Activated CD8-positive, alpha-beta T cell treated with anti-CD3 and anti-CD28 coated beads, Interleukin-2, amount 10 ng/mL, durations not matched to agents 7 days and 5 days (primary cell): ENCODE measurements at regions of chr7 and their contacts with region 1.

Region 1: GRCh38 chr7:141975806-141976523 is 2.4 kb upstream of the TAS2R38 start:
- DNase-seq: peak; percentile 77
- ATAC-seq: peak; percentile 91
- H3K4me3 Mint-ChIP-seq: peak overlapping the region; percentile 63
- H3K27ac Mint-ChIP-seq: peak overlapping the region; percentile 1
- H3K4me1 Mint-ChIP-seq: peaks cover 22% of the 10 kb centered on the region
- H3K27me3 Mint-ChIP-seq: no peaks in the 10 kb centered on the region

Region 2: DNA sequence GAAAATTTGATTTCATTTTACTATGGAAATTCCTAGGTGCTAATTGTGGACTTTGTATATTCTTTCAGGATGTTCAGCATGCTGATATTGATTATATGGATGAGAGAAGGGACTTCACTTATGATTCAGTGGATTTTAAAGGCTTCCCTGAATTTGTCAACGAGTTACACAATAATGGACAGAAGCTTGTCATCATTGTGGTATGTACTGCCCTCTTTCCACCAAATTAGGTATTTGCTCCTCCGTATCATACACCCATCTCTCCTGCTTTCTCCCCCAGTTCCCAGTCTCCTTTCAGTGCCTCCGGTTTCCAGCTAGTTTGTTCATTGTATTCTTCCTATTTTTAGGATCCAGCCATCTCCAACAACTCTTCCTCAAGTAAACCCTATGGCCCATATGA is 54.3 kb after region 1 on chr7:
- CTCF ChIA-PET with region 1: interaction called, 11 read pairs
- POLR2A ChIA-PET with region 1: no interaction called
- DNase-seq: no peak
- ATAC-seq: no peak
- H3K4me3 Mint-ChIP-seq: no peak overlapping the region
- H3K27ac Mint-ChIP-seq: no peak overlapping the region
- H3K4me1 Mint-ChIP-seq: no peaks in the 10 kb centered on the region
- H3K27me3 Mint-ChIP-seq: peaks cover 7% of the 10 kb centered on the region

Region 3: GRCh38 chr7:142130267-142130666 is 154.3 kb after region 1 on chr7:
- CTCF ChIA-PET with region 1: interaction called, 11 read pairs
- POLR2A ChIA-PET with region 1: no interaction called
- DNase-seq: no peak
- ATAC-seq: no peak
- H3K4me3 Mint-ChIP-seq: no peak overlapping the region
- H3K27ac Mint-ChIP-seq: no peak overlapping the region
- H3K4me1 Mint-ChIP-seq: no peaks in the 10 kb centered on the region
- H3K27me3 Mint-ChIP-seq: no peaks in the 10 kb centered on the region

Region 4: DNA sequence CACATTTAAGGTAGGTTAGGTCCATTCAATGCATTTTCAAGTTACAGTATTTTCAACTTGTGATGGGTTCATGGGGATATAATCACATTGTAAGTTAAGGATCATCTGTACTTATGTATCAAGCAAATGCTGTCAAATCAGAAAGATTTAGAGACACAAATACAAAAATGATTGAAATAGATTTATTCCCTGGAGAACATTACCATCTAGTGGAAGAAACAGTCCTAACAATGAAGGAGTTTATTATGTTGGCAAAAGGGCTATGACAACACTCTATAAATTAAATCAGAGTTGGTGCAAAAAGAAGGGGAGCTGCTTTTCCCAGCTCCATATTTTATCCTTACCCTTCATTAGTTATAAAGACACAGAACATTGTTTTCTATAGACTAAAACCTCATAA is 212.9 kb after region 1 on chr7:
- CTCF ChIA-PET with region 1: interaction called, 10 read pairs
- POLR2A ChIA-PET with region 1: no interaction called
- DNase-seq: no peak
- ATAC-seq: no peak
- H3K4me3 Mint-ChIP-seq: no peak overlapping the region
- H3K27ac Mint-ChIP-seq: no peak overlapping the region
- H3K4me1 Mint-ChIP-seq: peaks cover 8% of the 10 kb centered on the region
- H3K27me3 Mint-ChIP-seq: peaks cover 19% of the 10 kb centered on the region

Region 5: GRCh38 chr7:142313528-142313927 is 337.6 kb after region 1 on chr7:
- CTCF ChIA-PET with region 1: interaction called, 10 read pairs
- POLR2A ChIA-PET with region 1: no interaction called
- DNase-seq: peak; percentile 45
- ATAC-seq: peak; percentile 77
- H3K4me3 Mint-ChIP-seq: peak overlapping the region; percentile 10
- H3K27ac Mint-ChIP-seq: no peak overlapping the region
- H3K4me1 Mint-ChIP-seq: peaks cover 11% of the 10 kb centered on the region
- H3K27me3 Mint-ChIP-seq: peaks cover 32% of the 10 kb centered on the region